ENCODE measurements at regions of chr17 and their contacts with region 1.

Region 1: DNA sequence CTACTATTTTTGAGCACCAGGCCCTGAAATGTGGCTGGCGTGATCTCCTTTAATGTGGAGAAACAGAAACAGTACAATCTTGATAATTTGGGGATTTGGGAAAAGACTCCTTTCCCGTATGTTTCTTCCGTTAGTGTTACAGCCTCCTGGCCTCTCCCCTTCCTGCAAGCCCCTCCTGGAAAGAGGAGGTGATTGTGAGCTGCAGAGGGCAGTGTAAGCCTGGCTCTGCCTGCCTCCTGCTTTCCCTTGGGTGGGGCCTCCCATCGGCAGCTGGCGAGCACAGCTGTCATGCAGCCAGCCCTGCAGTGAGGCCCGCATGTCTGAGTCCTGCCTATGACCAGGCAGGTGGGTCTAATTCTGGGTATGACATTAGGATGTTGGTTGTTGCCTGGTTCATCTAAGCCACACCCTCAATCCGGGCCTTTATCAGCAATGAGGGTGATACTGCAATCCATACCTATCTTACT is 48.7 kb upstream of the WSB1 start:
- DNase-seq: peak; percentile 89
- ATAC-seq: peak; percentile 88
- H3K4me3 ChIP-seq: peak overlapping the region; percentile 18; the same call in 1 of the 2 replicates
- H3K27ac ChIP-seq: peak overlapping the region; percentile 78
- H3K4me1 ChIP-seq: peaks cover 18% of the 10 kb centered on the region
- H3K27me3 ChIP-seq: no peaks in the 10 kb centered on the region
- CTCF ChIP-seq: peak; percentile 78
- POLR2A ChIP-seq: no peak
- RAD21 ChIP-seq: peak; percentile 86

Region 2: GRCh38 chr17:27293898-27294688 is 48.8 kb after region 1 on chr17 and contains the start of gene WSB1:
- CTCF ChIA-PET with region 1: interaction called, 5 read pairs
- POLR2A ChIA-PET with region 1: interaction called, 6 read pairs
- dilution Hi-C with region 1: no loop called
- in situ Hi-C with region 1: loop called (anchors 5 kb)
- intact Hi-C with region 1: loop called (anchors 1 kb)
- DNase-seq: peak; percentile 89
- ATAC-seq: peak; percentile 86
- H3K4me3 ChIP-seq: peak within 1 kb of the TSS; percentile 83
- H3K27ac ChIP-seq: peak within 1 kb of the TSS; percentile 96
- H3K4me1 ChIP-seq: peaks cover 8% of the 10 kb centered on the region
- H3K27me3 ChIP-seq: no peaks in the 10 kb centered on the region
- CTCF ChIP-seq: 0 out of 2 replicates have a peak, but pooled peaks have one; percentile 1
- POLR2A ChIP-seq: peak; percentile 99
- RAD21 ChIP-seq: no peak
- total RNA-seq, gene WSB1: 112 and 140 TPM in 2 replicates

Region 3: GRCh38 chr17:27315322-27315721 is 70.1 kb after region 1 on chr17:
- CTCF ChIA-PET with region 1: interaction called, 3 read pairs
- POLR2A ChIA-PET with region 1: no interaction called
- dilution Hi-C with region 1: no loop called
- in situ Hi-C with region 1: no loop called
- intact Hi-C with region 1: loop called (anchors 1 kb)
- DNase-seq: peak; percentile 94
- ATAC-seq: peak; percentile 91
- H3K4me3 ChIP-seq: no peak overlapping the region
- H3K27ac ChIP-seq: no peak overlapping the region; the same call in 1 of the 2 replicates
- H3K4me1 ChIP-seq: peaks cover 11% of the 10 kb centered on the region
- H3K27me3 ChIP-seq: no peaks in the 10 kb centered on the region
- CTCF ChIP-seq: no peak
- POLR2A ChIP-seq: no peak
- RAD21 ChIP-seq: no peak

Region 4: GRCh38 chr17:27332485-27333409 is 87.5 kb after region 1 on chr17:
- CTCF ChIA-PET with region 1: interaction called, 12 read pairs
- POLR2A ChIA-PET with region 1: no interaction called
- dilution Hi-C with region 1: loop called (anchors 25 kb)
- in situ Hi-C with region 1: loop called (anchors 5 kb)
- intact Hi-C with region 1: loop called (anchors 1 kb)
- DNase-seq: peak; percentile 94
- ATAC-seq: peak; percentile 97
- H3K4me3 ChIP-seq: peak overlapping the region; percentile 40
- H3K27ac ChIP-seq: peak overlapping the region; percentile 48
- H3K4me1 ChIP-seq: peaks cover 4% of the 10 kb centered on the region; the same call in 1 of the 2 replicates
- H3K27me3 ChIP-seq: no peaks in the 10 kb centered on the region
- CTCF ChIP-seq: peak; percentile 96
- POLR2A ChIP-seq: peak; percentile 51
- RAD21 ChIP-seq: peak; percentile 96

Region 5: DNA sequence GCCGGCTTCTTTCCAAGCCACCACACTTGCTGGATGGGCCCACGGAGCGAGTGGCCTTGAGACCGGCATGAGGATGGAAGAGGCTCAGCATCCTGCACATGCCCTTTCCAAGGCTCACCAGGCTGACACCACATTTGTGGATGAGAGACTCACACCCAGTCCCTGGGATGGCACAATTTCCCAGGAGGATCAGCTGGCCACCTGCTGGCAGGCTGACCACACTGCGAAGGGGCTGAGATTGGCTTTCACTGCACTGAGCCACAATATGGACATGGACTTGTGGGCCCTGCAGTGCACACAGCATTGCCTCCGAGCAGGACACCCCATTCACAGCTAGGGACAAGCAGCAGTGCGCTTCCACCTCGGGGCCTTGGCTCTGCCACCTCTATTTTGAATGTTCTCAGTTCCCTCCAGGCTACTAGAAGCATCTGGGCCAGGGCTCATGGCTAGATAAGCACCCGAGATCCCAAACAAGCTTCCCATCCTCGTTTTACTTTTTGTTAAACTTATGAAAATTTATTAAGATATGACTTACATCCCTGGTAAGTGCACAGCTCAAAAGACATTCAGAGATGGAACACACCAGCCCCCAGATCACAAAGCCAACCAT is 185.7 kb after region 1 on chr17:
- CTCF ChIA-PET with region 1: no interaction called
- POLR2A ChIA-PET with region 1: no interaction called
- dilution Hi-C with region 1: no loop called
- in situ Hi-C with region 1: loop called (anchors 25 kb)
- intact Hi-C with region 1: loop called (anchors 2 kb)
- DNase-seq: peak; percentile 51
- ATAC-seq: peak; percentile 80
- H3K4me3 ChIP-seq: no peak overlapping the region
- H3K27ac ChIP-seq: no peak overlapping the region
- H3K4me1 ChIP-seq: peaks cover 6% of the 10 kb centered on the region
- H3K27me3 ChIP-seq: no peaks in the 10 kb centered on the region
- CTCF ChIP-seq: peak; percentile 70
- POLR2A ChIP-seq: no peak
- RAD21 ChIP-seq: peak; percentile 76

Region 6: DNA sequence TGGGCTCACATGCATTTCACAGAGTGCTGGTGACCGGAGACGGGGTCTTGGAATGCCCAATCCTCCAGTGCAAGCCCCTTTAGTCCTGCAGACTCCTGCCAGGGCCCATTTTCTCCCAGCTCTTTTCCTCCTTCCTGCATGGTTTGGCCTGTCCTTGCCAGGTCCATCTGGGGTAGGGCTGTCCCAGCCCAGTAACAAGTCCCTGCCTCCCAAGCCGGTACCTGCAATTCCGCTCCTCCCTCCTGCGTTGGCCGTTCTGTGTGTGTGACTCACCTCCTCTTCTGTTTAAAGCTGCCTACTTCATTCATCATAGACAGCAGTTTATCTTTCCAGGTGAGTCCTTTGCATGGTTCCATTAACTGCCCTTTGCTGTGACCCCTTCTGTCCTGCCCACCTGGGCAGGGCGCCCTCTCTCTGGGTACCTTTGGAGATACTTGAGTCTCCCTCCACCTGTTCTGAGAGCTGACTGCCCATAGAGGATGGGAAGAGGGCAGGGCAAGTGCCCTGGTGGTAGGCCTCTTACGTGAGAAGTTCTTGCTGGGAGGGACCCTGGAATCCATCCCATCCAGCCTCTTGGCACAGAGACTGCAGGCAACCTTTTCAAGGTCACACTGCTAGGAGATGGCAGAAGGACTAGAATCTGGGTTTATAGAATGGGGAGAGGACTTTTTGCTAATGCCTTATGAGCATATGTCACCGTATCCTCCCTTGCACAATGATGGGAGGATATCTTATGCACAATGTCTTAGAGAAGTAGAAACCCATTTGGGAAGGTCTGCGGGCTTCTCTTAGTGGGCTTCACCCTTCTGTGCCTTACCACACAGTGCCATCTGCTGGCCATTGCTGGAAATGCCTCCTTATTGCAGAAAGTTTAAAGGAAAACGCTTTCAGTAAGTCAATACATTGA is 356.1 kb after region 1 on chr17:
- CTCF ChIA-PET with region 1: interaction called, 3 read pairs
- POLR2A ChIA-PET with region 1: no interaction called
- dilution Hi-C with region 1: no loop called
- in situ Hi-C with region 1: loop called (anchors 10 kb)
- intact Hi-C with region 1: loop called (anchors 2 kb)
- DNase-seq: peak; percentile 83
- ATAC-seq: peak; percentile 65
- H3K4me3 ChIP-seq: no peak overlapping the region
- H3K27ac ChIP-seq: no peak overlapping the region
- H3K4me1 ChIP-seq: peaks cover 2% of the 10 kb centered on the region; the same call in 1 of the 2 replicates
- H3K27me3 ChIP-seq: no peaks in the 10 kb centered on the region
- CTCF ChIP-seq: peak; percentile 97
- POLR2A ChIP-seq: peak; percentile 37; the same call in 1 of the 2 replicates
- RAD21 ChIP-seq: peak; percentile 97

Region 7: DNA sequence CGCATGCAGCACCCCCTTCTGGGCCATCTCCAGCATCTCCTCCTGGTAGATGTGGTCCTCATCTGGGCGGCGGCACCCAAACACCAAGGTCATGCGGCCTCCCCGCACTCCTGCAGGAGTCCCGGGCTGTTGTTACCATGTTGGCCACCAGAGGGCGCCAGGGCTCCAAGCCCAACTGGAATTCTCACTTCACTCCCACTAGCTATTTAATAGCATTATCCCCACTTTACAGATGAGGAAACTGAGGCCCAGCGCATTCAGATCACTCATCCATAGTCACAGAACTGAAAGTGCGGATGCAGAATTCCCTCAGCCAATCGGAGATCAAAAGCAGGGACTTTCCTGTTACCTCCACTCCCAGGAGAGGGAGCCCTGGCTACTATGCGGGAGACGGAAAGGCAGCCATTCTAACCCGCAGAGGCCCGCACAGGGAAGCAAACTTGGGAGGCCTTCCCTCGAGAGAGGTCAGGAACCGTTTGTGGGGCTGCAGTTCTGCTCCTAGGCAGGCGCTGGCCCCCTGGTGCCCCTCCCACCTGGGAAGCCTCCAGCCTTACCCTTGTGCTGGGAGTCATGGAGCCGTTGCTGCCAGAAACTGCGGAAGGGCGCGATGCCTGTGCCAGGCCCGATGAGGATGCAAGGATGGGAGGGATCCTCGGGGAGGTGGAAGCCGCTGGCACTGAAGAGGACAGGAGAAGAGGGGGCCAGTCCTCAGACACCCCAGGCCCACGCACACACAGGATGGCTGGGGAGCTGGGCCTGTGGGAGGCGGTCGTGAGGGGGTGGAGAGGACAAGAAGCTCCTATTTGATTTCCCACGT is 515.0 kb after region 1 on chr17:
- CTCF ChIA-PET with region 1: no interaction called
- POLR2A ChIA-PET with region 1: no interaction called
- dilution Hi-C with region 1: no loop called
- in situ Hi-C with region 1: loop called (anchors 25 kb)
- intact Hi-C with region 1: no loop called
- DNase-seq: peak; percentile 14
- ATAC-seq: peak; percentile 75
- H3K4me3 ChIP-seq: no peak overlapping the region
- H3K27ac ChIP-seq: no peak overlapping the region
- H3K4me1 ChIP-seq: no peaks in the 10 kb centered on the region
- H3K27me3 ChIP-seq: no peaks in the 10 kb centered on the region; the same call in 1 of the 2 replicates
- CTCF ChIP-seq: peak; percentile 74
- POLR2A ChIP-seq: no peak
- RAD21 ChIP-seq: peak; percentile 67